Heart left ventricle (tissue), 16 donors: ENCODE measurements at regions of chr19 and their contacts with region 1.

Region 1: DNA sequence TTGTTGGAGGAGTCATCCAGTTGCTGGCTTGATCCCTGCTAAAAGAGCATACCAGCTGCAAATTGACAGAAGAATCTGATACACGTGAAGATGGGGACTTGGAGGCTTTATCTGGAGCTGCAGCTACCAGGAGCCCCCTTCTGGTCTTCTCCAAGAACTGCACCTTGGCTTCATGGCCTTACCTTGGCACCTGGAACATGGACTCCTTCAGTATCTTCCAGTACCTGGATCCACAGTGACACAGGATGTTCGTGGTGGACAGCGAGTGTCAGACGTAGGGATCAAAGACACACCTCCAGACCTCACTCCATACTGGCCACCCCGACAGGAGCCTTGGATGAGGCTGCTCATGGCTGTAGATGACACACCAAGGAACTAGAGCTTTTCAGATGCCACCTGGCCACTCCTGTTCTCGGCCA is 9.9 kb upstream of the ACSBG2 start:
- DNase-seq: peak in 4 of 5 donors; percentile 48 to 57 (median 53)
- ATAC-seq: peak; percentile 61 to 87 (median 80)
- H3K4me3 ChIP-seq: no peak overlapping the region
- H3K27ac ChIP-seq: no peak overlapping the region
- H3K4me1 ChIP-seq: no peaks in the 10 kb centered on the region
- H3K27me3 ChIP-seq: no peaks in the 10 kb centered on the region
- CTCF ChIP-seq: peak; percentile 91 to 97 (median 94)
- POLR2A ChIP-seq: no peak

Region 2: GRCh38 chr19:5987077-5987818 is 138.3 kb before region 1 on chr19:
- intact Hi-C with region 1: loop called in 4 of 10 experiments (anchors 5 to 10 kb)
- DNase-seq: peak in 4 of 5 donors; percentile 57 to 82 (median 72)
- ATAC-seq: peak in 3 of 4 donors; percentile 36 to 76 (median 52)
- H3K4me3 ChIP-seq: peak overlapping the region in 9 of 12 donors; percentile 29 to 51 (median 35)
- H3K27ac ChIP-seq: no peak overlapping the region
- H3K4me1 ChIP-seq: peaks cover 0 to 18% (median 6%) of the 10 kb centered on the region in 12 donors
- H3K27me3 ChIP-seq: no peaks in the 10 kb centered on the region
- CTCF ChIP-seq: peak; percentile 87 to 98 (median 95)
- POLR2A ChIP-seq: no peak

Region 3: DNA sequence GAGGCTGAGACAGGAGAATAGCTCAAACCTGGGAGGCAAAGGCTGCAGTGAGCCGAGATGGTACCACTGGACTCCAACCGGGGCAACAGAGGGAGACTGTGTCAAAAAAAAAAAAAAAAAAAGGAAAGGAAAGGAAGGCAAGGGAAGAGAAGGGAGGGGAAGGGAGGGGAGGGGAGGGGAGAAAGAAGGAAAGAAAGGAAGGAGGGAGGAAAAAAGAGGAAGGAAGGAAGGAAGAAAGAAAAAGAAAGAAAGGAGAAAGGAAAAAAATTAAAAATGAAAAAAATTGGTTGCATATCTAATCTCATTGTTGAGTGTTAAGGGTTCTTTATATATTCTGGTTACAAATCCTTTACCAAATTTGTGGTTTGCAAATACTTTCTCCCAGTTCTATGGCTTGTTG is 55.5 kb after region 1 on chr19:
- intact Hi-C with region 1: no loop called
- DNase-seq: no peak
- ATAC-seq: no peak
- H3K4me3 ChIP-seq: no peak overlapping the region
- H3K27ac ChIP-seq: no peak overlapping the region
- H3K4me1 ChIP-seq: peaks cover 0 to 3% (median 0%) of the 10 kb centered on the region in 12 donors
- H3K27me3 ChIP-seq: peaks cover 0 to 30% (median 0%) of the 10 kb centered on the region in 9 donors
- CTCF ChIP-seq: no peak
- POLR2A ChIP-seq: no peak

Region 4: DNA sequence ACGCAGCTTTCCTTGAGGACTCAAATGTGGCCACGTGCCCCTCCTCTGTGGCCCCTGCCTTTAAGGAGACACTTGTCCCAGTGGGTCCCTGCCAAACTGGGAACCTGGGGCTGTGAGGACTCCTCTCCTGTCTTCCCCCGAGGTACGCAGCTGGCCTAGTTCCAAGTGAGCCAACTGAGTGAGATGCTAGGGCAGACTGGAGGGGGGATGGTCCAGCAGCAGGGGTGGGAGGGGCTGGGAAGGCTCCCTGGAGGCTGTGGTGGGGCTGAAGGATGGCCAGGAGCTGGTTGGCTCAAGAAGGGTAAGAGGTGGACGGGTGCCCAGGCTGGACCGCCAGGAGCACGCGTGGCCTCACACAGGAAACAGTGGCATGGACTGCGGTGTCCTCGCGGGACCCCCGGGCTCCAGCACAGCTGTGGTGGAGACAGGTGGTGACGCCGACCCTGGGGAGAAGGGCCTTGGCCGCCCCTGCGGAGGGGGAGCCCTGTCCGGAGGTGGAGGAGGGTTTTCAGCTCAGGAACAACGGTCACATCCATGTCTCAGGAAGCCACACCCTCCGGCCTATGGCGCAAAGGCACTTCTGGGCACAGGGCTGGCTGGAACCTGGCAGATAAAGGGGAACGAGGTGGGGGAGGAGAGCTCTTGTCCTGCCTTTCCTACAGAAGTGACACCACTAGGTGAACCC is 108.4 kb after region 1 on chr19:
- intact Hi-C with region 1: no loop called
- DNase-seq: peak; percentile 68 to 88 (median 76)
- ATAC-seq: peak; percentile 70 to 79 (median 76)
- H3K4me3 ChIP-seq: peak overlapping the region in 6 of 12 donors; percentile 4 to 22 (median 12)
- H3K27ac ChIP-seq: peak overlapping the region; percentile 72 to 90 (median 80)
- H3K4me1 ChIP-seq: peaks cover 26 to 82% (median 62%) of the 10 kb centered on the region in 12 donors
- H3K27me3 ChIP-seq: no peaks in the 10 kb centered on the region
- CTCF ChIP-seq: no peak
- POLR2A ChIP-seq: no peak

Region 5: GRCh38 chr19:6297202-6297601 is 171.6 kb after region 1 on chr19:
- intact Hi-C with region 1: loop called in 3 of 10 experiments (anchors 5 to 10 kb)
- DNase-seq: no peak
- ATAC-seq: no peak
- H3K4me3 ChIP-seq: no peak overlapping the region
- H3K27ac ChIP-seq: no peak overlapping the region
- H3K4me1 ChIP-seq: no peaks in the 10 kb centered on the region
- H3K27me3 ChIP-seq: peaks cover 0 to 8% (median 0%) of the 10 kb centered on the region in 9 donors
- CTCF ChIP-seq: no peak
- POLR2A ChIP-seq: no peak